Naive thymus-derived CD4-positive, alpha-beta T cell (primary cell): ENCODE measurements at regions of chr3 and their contacts with region 1.

Region 1: GRCh38 chr3:108602249-108602934 is 12.9 kb downstream of the DZIP3 start:
- DNase-seq: peak in 7 of 9 donors; percentile 34 to 74 (median 57)
- ATAC-seq: peak; percentile 92
- H3K4me3 ChIP-seq: peak overlapping the region; percentile 22
- H3K4me3 Mint-ChIP-seq: peak overlapping the region; percentile 25 to 81 (median 74)
- H3K27ac ChIP-seq: peak overlapping the region; percentile 69
- H3K27ac Mint-ChIP-seq: peak overlapping the region; percentile 76 to 97 (median 93)
- H3K4me1 ChIP-seq: peaks cover 38 to 46% of the 10 kb centered on the region in 2 donors
- H3K4me1 Mint-ChIP-seq: peaks cover 27 to 64% (median 54%) of the 10 kb centered on the region in 7 donors
- H3K27me3 ChIP-seq: no peaks in the 10 kb centered on the region
- H3K27me3 Mint-ChIP-seq: no peaks in the 10 kb centered on the region

Region 2: DNA sequence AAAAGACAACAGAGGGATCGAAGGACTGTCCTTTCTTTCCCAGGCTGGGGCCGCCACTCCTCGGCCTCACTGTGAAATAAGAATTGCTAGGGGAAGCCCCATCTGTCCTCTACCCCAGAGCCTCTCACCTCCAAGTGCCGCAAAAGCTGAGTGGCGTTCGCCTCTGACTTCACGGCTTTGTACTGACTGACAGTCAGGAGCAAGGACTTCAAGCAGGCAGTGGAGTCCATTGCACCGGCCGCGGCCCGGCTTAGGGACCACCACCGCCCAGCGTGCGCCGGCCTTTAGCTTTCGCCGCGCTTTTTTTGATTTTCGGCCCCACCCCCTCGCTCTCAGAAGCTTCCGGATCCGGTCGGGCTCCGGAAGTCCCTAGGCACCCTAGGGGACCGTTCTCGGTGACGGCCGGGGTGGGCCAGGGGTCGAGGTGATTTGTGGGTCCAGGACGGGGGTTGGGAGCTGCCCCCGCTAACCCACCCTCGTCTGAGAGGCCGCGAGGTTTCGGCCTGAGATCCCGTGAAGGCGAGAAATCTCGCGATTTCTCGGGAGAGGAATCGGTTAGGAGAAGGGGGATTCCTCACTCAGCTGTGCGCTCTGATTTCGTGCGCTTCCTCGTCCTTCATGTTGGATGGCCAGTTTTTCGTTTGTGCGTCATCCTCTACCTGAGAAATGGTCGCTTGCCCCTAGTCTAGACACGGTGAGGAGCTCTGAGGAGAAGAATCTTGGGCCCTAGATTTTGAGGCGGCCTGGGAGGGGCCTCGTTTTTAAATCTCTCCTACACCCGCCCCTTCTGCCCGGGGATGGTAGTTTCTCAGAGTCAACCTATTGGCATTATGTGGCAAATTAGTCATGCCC is 13.0 kb before region 1 on chr3 and contains the starts of genes CIP2A and DZIP3:
- CTCF ChIA-PET with region 1: interaction called, 39 read pairs
- POLR2A ChIA-PET with region 1: interaction called, 159 read pairs
- intact Hi-C with region 1: loop called (anchors 1 kb)
- DNase-seq: peak; percentile 74 to 88 (median 82)
- ATAC-seq: peak; percentile 83
- H3K4me3 ChIP-seq: peak within 1 kb of the TSS; percentile 87
- H3K4me3 Mint-ChIP-seq: peak within 1 kb of the TSS; percentile 94 to 99 (median 98)
- H3K27ac ChIP-seq: peak within 1 kb of the TSS; percentile 92
- H3K27ac Mint-ChIP-seq: peak within 1 kb of the TSS; percentile 95 to 100 (median 99)
- H3K4me1 ChIP-seq: peaks cover 11 to 15% of the 10 kb centered on the region in 2 donors
- H3K4me1 Mint-ChIP-seq: peaks cover 12 to 53% (median 39%) of the 10 kb centered on the region in 7 donors
- H3K27me3 ChIP-seq: no peaks in the 10 kb centered on the region
- H3K27me3 Mint-ChIP-seq: no peaks in the 10 kb centered on the region
- total RNA-seq, gene CIP2A: 3.4 to 44.2 (median 4.1) TPM
- total RNA-seq, gene DZIP3: 9.6 to 17.3 (median 14.6) TPM

Region 3: DNA sequence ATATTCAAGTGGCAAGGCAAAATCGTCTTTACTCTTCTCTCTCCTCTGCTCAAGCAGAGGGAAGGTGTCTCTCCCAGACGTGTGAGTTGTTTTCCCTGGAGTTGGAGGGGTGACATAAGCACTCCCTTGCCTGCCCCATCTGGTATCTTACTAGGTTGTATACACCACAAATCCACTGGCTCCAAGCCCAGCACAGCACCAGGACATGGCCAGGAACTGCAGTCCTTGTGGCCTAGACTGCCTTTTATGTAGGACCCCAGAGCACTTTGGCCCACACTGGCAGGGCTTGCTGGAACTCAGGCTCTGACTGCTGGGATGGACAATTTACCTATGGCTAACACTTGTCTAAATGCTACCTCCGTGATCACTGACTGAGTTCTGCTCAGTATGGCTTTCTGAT is 21.1 kb after region 1 on chr3:
- CTCF ChIA-PET with region 1: no interaction called
- POLR2A ChIA-PET with region 1: no interaction called
- intact Hi-C with region 1: loop called in 1 of 2 experiments (anchors 1 kb)
- DNase-seq: no peak
- ATAC-seq: no peak
- H3K4me3 ChIP-seq: no peak overlapping the region
- H3K4me3 Mint-ChIP-seq: no peak overlapping the region
- H3K27ac ChIP-seq: no peak overlapping the region
- H3K27ac Mint-ChIP-seq: no peak overlapping the region
- H3K4me1 ChIP-seq: no peaks in the 10 kb centered on the region
- H3K4me1 Mint-ChIP-seq: no peaks in the 10 kb centered on the region
- H3K27me3 ChIP-seq: no peaks in the 10 kb centered on the region
- H3K27me3 Mint-ChIP-seq: no peaks in the 10 kb centered on the region